ENCODE measurements at regions of chr20 and their contacts with region 1.

Region 1: DNA sequence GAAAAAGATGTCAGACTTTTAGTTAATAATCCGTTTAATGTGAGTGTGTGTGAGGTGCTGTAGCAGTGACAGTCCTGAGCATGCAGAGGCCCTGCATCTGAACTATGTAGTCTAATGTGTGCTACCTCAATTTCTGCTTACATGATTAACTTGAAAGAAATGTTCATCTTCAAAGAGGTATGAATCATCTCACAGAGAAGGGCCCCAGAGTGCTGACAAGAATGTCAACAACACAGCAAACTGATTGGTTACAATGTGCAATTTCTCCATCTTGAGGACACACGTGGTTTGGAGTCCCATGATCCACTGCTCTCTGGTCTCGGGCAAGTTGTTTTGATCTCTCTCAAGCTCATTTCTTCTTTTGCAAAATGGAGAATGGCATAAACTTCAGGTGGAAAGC is 61.7 kb upstream of the EMILIN3 start:
- DNase-seq: peak in 8 of 9 donors; percentile 29 to 76 (median 57)
- ATAC-seq: peak; percentile 95
- H3K4me3 ChIP-seq: no peak overlapping the region
- H3K4me3 Mint-ChIP-seq: peak overlapping the region in 9 of 10 donors; percentile 3 to 85 (median 47)
- H3K27ac ChIP-seq: peak overlapping the region; percentile 54
- H3K27ac Mint-ChIP-seq: peak overlapping the region; percentile 31 to 98 (median 89)
- H3K4me1 ChIP-seq: peaks cover 0 to 22% of the 10 kb centered on the region in 2 donors
- H3K4me1 Mint-ChIP-seq: peaks cover 19 to 54% (median 51%) of the 10 kb centered on the region in 7 donors
- H3K27me3 ChIP-seq: no peaks in the 10 kb centered on the region
- H3K27me3 Mint-ChIP-seq: no peaks in the 10 kb centered on the region

Region 2: DNA sequence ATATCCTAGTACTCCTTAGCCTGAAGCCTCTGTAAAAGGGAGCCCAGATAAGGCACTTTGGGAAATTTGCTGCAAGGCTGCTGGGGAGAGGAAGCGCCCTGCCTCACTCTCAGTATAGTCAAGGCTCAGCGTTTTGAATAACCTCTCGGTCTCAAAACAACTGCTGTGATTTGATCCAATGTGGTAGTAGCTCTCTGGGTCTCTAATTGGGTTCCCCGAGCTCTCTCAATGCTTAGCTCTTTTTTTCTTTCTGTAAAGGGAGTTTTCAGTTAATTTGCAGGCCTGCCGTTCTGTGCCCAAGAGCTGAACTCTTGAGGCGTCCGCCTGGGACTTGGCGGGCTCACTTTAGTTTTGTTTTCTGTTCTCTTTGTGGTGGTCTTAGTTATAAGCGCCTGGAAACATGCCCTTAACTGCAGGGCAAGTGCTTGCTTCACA is 152.0 kb before region 1 on chr20:
- CTCF ChIA-PET with region 1: no interaction called
- POLR2A ChIA-PET with region 1: no interaction called
- intact Hi-C with region 1: no loop called
- DNase-seq: no peak
- ATAC-seq: no peak
- H3K4me3 ChIP-seq: no peak overlapping the region
- H3K4me3 Mint-ChIP-seq: no peak overlapping the region
- H3K27ac ChIP-seq: no peak overlapping the region
- H3K27ac Mint-ChIP-seq: no peak overlapping the region
- H3K4me1 ChIP-seq: no peaks in the 10 kb centered on the region
- H3K4me1 Mint-ChIP-seq: peaks cover 0 to 4% (median 0%) of the 10 kb centered on the region in 7 donors
- H3K27me3 ChIP-seq: no peaks in the 10 kb centered on the region
- H3K27me3 Mint-ChIP-seq: peaks cover 0 to 2% (median 0%) of the 10 kb centered on the region in 5 donors

Region 3: DNA sequence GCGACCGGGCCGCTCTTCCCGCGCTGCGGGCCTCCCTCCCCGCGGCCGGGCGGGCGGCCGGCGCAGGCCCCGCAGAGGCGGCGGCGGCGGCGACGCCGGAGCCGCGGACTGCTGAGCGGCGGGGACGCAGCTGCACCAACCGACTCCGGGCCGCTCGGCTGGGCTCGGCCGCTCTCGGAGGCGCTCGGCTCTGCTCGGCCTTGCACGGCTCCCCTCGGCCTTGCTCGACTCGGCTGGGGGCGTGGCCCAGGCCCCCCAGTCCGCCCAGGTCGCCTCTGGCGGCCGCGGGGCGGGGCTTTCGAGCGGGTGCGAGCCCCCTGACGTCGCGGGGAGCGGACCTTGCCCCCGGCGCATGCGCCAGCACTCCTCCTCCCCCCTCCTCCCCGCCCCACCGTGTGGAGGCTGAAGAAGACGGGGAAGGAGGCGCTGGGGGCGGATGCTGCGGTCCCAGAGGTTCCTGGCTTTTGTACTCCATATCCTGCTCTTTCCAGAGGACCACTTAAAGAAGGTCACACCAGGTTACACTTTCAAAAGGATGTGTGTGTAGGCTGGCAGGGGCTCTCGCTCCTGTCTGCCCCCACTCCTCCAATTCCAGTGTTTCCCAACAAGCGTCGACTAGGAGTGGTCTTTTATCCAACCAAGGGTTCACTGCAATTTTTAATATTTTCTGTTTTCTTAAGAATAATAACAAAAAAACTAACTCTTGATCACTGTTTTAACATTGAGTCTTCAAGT is 110.6 kb before region 1 on chr20 and contains the start of gene ZHX3:
- CTCF ChIA-PET with region 1: no interaction called
- POLR2A ChIA-PET with region 1: no interaction called
- intact Hi-C with region 1: loop called in 1 of 2 experiments (anchors 2 kb)
- DNase-seq: peak; percentile 90 to 97 (median 95)
- ATAC-seq: peak; percentile 99
- H3K4me3 ChIP-seq: peak within 1 kb of the TSS; percentile 47
- H3K4me3 Mint-ChIP-seq: peak within 1 kb of the TSS; percentile 74 to 92 (median 84)
- H3K27ac ChIP-seq: peak within 1 kb of the TSS; percentile 75
- H3K27ac Mint-ChIP-seq: peak within 1 kb of the TSS; percentile 48 to 87 (median 84)
- H3K4me1 ChIP-seq: no peaks in the 10 kb centered on the region
- H3K4me1 Mint-ChIP-seq: peaks cover 11 to 34% (median 28%) of the 10 kb centered on the region in 7 donors
- H3K27me3 ChIP-seq: no peaks in the 10 kb centered on the region
- H3K27me3 Mint-ChIP-seq: peaks cover 0 to 7% (median 0%) of the 10 kb centered on the region in 5 donors
- total RNA-seq, gene ZHX3: 7.9 to 12.8 (median 9.8) TPM

Region 4: GRCh38 chr20:41411391-41411847 is 16.9 kb before region 1 on chr20:
- CTCF ChIA-PET with region 1: interaction called, 5 read pairs
- POLR2A ChIA-PET with region 1: interaction called, 3 read pairs
- intact Hi-C with region 1: loop called in 1 of 2 experiments (anchors 1 kb)
- DNase-seq: no peak
- ATAC-seq: peak; percentile 38
- H3K4me3 ChIP-seq: no peak overlapping the region
- H3K4me3 Mint-ChIP-seq: no peak overlapping the region
- H3K27ac ChIP-seq: no peak overlapping the region
- H3K27ac Mint-ChIP-seq: peak overlapping the region in 3 of 9 donors; percentile 19 to 78 (median 43)
- H3K4me1 ChIP-seq: peaks cover 3 to 7% of the 10 kb centered on the region in 2 donors
- H3K4me1 Mint-ChIP-seq: peaks cover 20 to 43% (median 26%) of the 10 kb centered on the region in 7 donors
- H3K27me3 ChIP-seq: no peaks in the 10 kb centered on the region
- H3K27me3 Mint-ChIP-seq: no peaks in the 10 kb centered on the region

Region 5: DNA sequence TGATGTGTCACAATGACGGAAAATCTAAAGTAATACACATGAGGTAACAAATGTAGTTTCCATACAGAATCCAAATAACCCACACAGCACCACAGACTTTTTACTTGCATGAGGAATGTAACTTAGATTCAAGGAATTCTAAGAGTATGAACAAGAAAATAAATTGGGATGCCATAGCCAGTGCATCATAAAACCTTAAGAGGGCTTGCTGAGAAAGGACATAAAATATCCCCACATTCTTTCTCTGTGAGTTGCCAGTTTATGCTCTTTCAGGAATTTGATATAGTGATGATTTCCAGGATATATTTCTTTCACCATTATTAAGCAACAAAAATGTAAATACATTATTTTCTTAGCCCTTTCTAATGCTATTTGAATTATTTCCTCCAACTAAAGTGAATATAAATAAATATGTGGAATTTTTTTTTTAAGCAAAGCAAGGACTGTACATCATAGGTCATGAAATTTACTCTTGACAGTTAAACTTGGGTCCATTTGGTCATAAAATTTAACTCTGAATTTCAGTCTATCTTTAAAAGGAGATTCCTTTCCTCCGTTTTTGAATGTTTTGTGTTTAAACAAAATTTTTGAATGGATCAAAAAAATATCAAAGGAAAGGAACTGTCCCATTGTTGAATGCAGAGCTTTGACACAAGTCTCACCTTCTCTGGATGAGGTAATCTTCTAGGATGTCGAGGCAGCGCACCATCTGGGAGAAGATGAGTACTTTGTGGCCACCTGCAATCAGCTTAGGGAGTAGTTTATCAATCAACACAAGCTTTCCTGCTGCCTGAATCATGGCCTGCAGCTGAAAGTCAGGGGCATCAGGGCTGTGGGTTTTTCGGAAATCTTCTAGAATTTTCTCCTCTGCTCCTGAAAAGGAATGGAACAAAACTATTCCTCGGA is 54.6 kb after region 1 on chr20:
- CTCF ChIA-PET with region 1: no interaction called
- POLR2A ChIA-PET with region 1: no interaction called
- intact Hi-C with region 1: loop called in 1 of 2 experiments (anchors 1 kb)
- DNase-seq: no peak
- ATAC-seq: no peak
- H3K4me3 ChIP-seq: no peak overlapping the region
- H3K4me3 Mint-ChIP-seq: no peak overlapping the region
- H3K27ac ChIP-seq: no peak overlapping the region
- H3K27ac Mint-ChIP-seq: peak overlapping the region in 7 of 9 donors; percentile 25 to 84 (median 68)
- H3K4me1 ChIP-seq: peaks cover 0 to 18% of the 10 kb centered on the region in 2 donors
- H3K4me1 Mint-ChIP-seq: peaks cover 11 to 35% (median 29%) of the 10 kb centered on the region in 7 donors
- H3K27me3 ChIP-seq: no peaks in the 10 kb centered on the region
- H3K27me3 Mint-ChIP-seq: no peaks in the 10 kb centered on the region

Region 6: DNA sequence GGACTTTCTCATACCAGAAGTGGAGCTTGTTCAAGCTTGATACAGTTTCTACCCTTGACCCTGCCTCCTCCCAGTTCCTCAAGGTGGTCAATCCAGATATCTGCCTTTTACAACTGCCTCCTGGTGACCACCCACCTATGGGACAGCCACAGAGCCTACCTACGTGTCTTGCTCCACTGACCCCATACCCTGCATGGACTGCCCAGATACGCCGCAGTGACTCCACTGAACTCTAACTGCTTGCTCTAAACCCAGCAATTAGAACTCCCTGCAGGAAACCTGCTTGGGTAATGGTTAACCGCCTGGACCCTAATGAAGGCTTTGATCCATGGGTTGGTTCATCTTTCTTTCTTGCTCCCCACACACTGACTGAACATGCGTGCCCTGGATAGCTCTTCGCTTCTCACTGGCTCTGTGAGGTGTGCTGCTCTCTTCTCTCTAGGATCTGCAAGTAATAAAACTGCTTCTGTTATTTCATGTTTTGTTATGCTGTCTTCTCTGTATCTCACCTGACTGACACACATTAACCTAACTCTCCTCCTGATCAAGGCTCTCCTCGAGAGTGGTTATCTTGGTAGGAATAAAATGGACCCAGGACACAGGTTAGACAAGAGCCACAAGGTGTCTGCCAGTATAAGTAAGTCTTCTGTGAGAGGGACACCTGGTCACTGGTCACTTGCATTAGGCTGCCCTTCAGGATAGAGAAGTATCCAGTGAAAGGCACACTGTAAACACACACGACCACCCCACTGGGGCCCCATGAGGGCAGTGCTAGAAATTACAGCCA is 110.7 kb after region 1 on chr20:
- CTCF ChIA-PET with region 1: no interaction called
- POLR2A ChIA-PET with region 1: no interaction called
- intact Hi-C with region 1: no loop called
- DNase-seq: no peak
- ATAC-seq: no peak
- H3K4me3 ChIP-seq: no peak overlapping the region
- H3K4me3 Mint-ChIP-seq: no peak overlapping the region
- H3K27ac ChIP-seq: no peak overlapping the region
- H3K27ac Mint-ChIP-seq: peak overlapping the region in 1 of 9 donors; percentile 65
- H3K4me1 ChIP-seq: no peaks in the 10 kb centered on the region
- H3K4me1 Mint-ChIP-seq: peaks cover 2 to 24% (median 16%) of the 10 kb centered on the region in 7 donors
- H3K27me3 ChIP-seq: no peaks in the 10 kb centered on the region
- H3K27me3 Mint-ChIP-seq: no peaks in the 10 kb centered on the region